ENCODE measurements at regions of chr16 and their contacts with region 1.

Region 1: GRCh38 chr16:83807710-83808572 is at the start of gene HSBP1:
- DNase-seq: peak; percentile 96
- H3K4me3 ChIP-seq: peak within 1 kb of the TSS; percentile 95
- H3K27ac ChIP-seq: peak within 1 kb of the TSS; percentile 14
- H3K4me1 ChIP-seq: peaks cover 22% of the 10 kb centered on the region
- CTCF ChIP-seq: no peak
- total RNA-seq, gene HSBP1: 131 and 150 TPM in 2 replicates

Region 2: DNA sequence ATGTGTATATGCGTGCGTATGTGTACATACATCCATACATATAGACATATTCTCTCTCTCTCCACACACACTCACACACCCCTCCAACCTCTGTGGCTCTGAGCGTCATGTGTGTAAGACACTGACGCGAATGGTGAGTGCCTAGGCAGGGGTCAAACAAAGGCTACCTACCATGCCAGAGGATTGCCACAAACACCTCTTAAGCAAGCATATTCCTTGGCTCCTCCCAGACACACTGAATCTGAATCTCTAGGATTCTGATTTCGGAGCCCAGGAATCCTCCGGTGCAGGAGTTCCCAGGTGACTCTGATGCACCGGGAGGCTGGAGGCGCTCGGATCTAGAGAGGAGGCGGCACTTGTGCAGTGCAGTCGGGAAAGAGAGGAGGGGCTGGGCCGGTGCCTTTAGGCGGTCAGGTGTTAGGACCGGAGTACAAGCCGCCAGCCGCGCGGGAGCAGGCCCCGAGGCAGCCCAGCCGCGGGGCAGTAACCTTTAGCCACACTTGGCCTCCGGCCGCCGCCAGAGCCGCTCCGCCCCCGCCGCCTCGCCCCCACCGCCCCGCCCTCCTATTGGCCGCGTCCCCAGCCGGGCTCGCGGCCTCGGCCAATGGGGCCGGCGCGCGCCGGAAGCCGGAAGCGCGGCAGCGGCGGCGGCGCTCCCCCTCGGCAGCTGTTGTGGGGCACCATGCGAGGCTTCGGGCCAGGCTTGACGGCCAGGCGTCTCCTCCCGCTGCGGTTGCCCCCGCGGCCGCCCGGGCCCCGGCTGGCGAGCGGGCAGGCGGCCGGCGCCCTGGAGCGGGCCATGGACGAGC is 90.7 kb after region 1 on chr16 and contains the start of gene MLYCD:
- CTCF ChIA-PET with region 1: no interaction called
- POLR2A ChIA-PET with region 1: no interaction called
- intact Hi-C with region 1: loop called (anchors 5 kb)
- DNase-seq: peak; percentile 84
- H3K4me3 ChIP-seq: peak within 1 kb of the TSS; percentile 81
- H3K27ac ChIP-seq: no peak within 1 kb of the TSS
- H3K4me1 ChIP-seq: peaks cover 13% of the 10 kb centered on the region
- CTCF ChIP-seq: no peak
- total RNA-seq, gene MLYCD: 3.2 and 3.5 TPM in 2 replicates

Region 3: GRCh38 chr16:84013787-84014569 is 206.0 kb after region 1 on chr16:
- CTCF ChIA-PET with region 1: no interaction called
- POLR2A ChIA-PET with region 1: no interaction called
- intact Hi-C with region 1: loop called (anchors 10 kb)
- DNase-seq: peak; percentile 98
- H3K4me3 ChIP-seq: no peak overlapping the region
- H3K27ac ChIP-seq: no peak overlapping the region
- H3K4me1 ChIP-seq: peaks cover 4% of the 10 kb centered on the region
- CTCF ChIP-seq: no peak

Measured in OCI-LY7 (cell line).